ENCODE measurements at regions of chr1 and their contacts with region 1.

Region 1: DNA sequence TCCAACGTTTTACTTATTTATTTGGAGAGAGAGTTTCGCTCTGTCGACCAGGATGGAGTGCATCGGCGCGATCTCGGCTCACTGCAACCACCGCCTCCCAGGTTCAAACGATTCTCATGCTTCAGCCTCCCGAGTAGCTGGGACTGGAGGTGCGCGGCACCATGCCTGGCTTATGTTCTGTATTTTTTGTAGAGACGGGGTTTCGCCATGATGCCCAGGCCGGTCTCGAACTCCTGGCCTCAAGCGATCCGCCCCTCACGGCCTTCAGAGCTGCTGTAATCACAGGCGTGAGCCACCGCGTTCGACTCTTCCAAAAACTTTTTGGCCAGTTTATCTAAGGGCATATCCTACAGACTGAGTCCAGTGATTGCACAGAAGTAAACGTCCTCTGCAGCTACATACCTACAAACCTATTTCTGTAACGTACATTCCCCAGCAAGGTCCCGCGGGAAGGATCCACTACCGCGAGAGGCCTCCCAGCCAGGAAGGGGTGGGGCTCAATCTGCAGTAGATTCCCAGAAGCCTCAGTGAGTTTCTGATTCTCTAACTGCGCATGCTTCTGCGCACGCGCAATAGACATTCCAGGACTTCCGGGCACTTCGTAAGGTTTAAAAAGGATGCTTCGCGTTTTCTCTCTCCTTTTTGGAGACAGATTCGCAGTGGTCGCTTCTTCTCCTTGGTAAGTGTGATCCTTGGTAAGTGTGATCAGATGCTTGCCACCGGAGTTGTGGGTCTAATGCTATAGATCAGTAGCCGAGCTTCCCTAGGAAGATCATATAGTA is at the start of gene RCC1:
- DNase-seq: peak; percentile 97
- ATAC-seq: peak; percentile 85
- H3K4me3 Mint-ChIP-seq: peak within 1 kb of the TSS; percentile 98
- H3K27ac Mint-ChIP-seq: peak within 1 kb of the TSS; percentile 99
- H3K4me1 Mint-ChIP-seq: peaks cover 26% of the 10 kb centered on the region
- H3K27me3 Mint-ChIP-seq: peaks cover 1% of the 10 kb centered on the region
- total RNA-seq, gene RCC1: 103 to 107 TPM

Region 2: DNA sequence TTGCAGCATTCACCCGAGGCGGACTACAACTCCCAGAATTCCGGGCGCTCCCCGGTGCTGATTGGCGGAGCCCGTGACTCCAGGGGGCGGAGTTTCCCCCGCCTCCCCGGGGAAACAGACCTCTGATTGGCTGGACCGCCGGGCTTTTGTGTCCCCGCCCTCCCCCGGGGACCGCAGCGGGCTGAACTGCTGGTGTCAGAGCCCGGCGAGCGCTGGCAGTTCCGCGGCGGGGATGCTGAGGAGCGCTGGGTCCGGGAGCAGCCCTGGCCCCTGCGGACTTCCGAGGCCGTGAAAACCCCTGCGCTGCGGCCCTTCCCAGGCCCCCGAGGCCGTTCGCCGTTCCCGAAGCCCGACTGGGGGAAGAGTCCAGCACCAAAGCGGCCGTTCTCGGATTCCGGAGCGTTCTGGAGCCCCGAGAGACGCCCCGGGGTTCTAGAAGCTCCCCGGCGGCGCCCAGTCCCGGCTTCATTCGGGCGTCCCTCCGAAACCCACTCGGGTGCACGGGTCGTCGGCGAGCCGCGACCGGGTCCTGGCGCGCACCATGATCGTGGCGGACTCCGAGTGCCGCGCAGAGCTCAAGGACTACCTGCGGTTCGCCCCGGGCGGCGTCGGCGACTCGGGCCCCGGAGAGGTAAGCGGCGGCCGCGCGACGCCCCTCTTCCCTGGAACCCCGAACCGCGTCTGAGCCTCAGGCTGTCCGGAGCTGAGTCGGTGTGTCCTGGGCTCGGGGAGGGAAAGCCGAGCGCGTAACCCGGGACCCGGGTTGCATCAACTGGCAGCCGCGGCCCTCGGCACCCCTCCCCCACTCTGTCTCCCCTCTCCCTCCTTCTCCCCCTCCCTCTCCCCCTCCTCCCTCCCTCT is 246.1 kb before region 1 on chr1 and contains the start of gene SESN2:
- CTCF ChIA-PET with region 1: no interaction called
- POLR2A ChIA-PET with region 1: no interaction called
- intact Hi-C with region 1: loop called in 1 of 2 experiments (anchors 1 kb)
- DNase-seq: peak; percentile 100
- ATAC-seq: peak; percentile 93
- H3K4me3 Mint-ChIP-seq: peak within 1 kb of the TSS; percentile 81
- H3K27ac Mint-ChIP-seq: peak within 1 kb of the TSS; percentile 99
- H3K4me1 Mint-ChIP-seq: peaks cover 42% of the 10 kb centered on the region
- H3K27me3 Mint-ChIP-seq: no peaks in the 10 kb centered on the region
- total RNA-seq, gene SESN2: 32.9 to 33.3 TPM

Region 3: DNA sequence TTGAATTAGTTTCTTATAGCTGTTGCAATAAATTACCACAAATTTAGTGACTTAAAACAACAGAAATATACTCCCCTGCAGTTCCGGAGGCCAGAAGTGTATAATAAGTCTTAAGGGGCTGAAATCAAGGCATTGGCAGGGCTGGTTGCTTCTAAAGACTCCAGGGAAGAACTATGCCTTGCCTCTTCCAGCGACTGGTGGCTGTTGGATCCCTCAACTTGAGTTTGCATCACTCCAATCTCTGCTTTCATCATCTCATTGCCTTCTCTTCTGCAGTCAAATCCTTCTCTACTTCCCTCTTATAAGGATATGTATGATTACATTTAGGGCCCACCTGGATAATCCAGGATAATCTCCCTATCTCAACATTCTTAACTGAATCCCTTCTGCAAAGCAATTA is 195.9 kb before region 1 on chr1:
- CTCF ChIA-PET with region 1: no interaction called
- POLR2A ChIA-PET with region 1: no interaction called
- intact Hi-C with region 1: no loop called
- DNase-seq: no peak
- ATAC-seq: no peak
- H3K4me3 Mint-ChIP-seq: no peak overlapping the region
- H3K27ac Mint-ChIP-seq: no peak overlapping the region
- H3K4me1 Mint-ChIP-seq: no peaks in the 10 kb centered on the region
- H3K27me3 Mint-ChIP-seq: no peaks in the 10 kb centered on the region

Region 4: GRCh38 chr1:28369371-28370238 is 136.0 kb before region 1 on chr1 and contains the start of gene PHACTR4:
- CTCF ChIA-PET with region 1: interaction called, 5 read pairs
- POLR2A ChIA-PET with region 1: interaction called, 3 read pairs
- intact Hi-C with region 1: loop called in 1 of 2 experiments (anchors 1 kb)
- DNase-seq: peak; percentile 90
- ATAC-seq: peak; percentile 93
- H3K4me3 Mint-ChIP-seq: peak within 1 kb of the TSS; percentile 92
- H3K27ac Mint-ChIP-seq: peak within 1 kb of the TSS; percentile 92
- H3K4me1 Mint-ChIP-seq: peaks cover 25% of the 10 kb centered on the region
- H3K27me3 Mint-ChIP-seq: no peaks in the 10 kb centered on the region
- total RNA-seq, gene PHACTR4: 23.0 to 30.1 TPM

Region 5: DNA sequence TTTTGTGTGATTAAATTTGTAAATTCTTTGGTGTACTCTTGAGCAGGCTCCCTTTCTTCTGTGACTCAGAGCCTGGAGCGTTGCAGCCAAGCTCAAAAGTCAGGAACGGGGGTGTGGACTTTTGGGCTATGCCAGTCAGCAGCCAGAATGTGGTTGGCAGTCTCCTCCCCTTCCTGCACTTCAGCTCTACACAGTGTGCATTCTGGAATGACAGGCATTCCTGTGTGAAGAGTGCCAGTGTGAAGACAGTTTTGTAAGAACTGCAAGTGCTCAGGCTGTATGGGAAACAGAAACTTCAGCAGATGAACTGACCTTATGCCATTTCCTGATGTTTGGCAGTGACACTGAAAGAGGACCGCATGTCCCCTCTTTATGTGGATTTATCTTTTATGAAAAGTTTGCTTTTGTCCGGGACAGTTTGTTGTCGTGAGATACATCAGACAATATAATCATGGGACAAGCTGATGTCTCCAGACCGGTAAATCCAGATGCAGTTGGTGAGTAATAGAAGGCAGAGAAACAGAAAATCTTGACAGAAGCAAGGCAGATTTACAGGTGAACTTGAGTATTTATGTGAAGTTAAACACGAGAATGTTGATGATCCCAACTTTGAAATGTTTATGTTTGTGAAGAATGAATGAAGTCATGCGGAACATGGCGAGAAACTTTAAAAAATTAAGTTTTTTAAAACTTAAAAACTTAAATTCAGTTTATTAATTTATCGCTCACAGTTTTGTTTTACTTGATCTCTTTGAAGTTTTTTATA is 67.5 kb before region 1 on chr1:
- CTCF ChIA-PET with region 1: no interaction called
- POLR2A ChIA-PET with region 1: no interaction called
- intact Hi-C with region 1: no loop called
- DNase-seq: peak; percentile 32
- ATAC-seq: peak; percentile 78
- H3K4me3 Mint-ChIP-seq: peak overlapping the region; percentile 20
- H3K27ac Mint-ChIP-seq: peak overlapping the region; percentile 58
- H3K4me1 Mint-ChIP-seq: peaks cover 25% of the 10 kb centered on the region
- H3K27me3 Mint-ChIP-seq: no peaks in the 10 kb centered on the region

Region 6: DNA sequence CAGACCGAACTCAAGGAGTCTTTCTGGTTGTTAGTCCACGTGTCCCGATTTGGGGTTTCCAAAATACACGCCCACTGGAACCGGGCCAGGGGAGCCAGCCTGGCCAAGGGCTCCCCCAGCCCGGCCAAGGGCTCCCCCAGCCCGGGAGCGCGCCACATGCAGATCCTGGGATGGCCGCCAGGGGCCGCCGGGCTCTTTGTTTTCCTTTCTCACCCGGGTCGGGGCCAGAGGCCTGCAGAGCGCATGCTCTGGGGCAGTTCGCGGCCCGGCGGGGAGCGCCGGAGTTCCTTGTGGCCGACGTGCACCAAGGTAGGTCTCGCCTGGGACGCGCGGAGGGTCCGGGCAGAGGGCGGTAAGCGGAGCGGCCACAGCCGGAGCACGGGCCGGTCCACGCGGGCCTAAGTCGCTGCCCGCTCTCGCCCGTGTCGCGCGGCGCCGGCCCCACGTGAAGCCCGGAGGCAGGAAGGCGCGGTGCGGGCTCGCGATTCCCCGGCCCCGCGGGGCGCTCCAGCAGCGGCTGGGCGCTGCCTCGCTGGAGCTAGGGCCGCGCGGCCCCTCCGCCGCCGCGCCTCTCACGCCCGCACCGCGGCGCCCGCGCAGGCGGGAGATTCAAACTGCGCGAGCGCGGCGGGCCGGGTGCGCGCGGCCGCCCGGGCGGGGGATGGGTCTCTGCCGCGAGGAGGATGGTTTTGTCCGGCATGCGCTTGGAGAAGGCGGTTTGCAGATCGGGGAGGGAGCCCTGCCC is 12.6 kb after region 1 on chr1:
- CTCF ChIA-PET with region 1: interaction called, 3 read pairs
- POLR2A ChIA-PET with region 1: interaction called, 6 read pairs
- intact Hi-C with region 1: loop called in 1 of 2 experiments (anchors 1 kb)
- DNase-seq: peak; percentile 95
- ATAC-seq: peak; percentile 66
- H3K4me3 Mint-ChIP-seq: peak overlapping the region; percentile 77
- H3K27ac Mint-ChIP-seq: peak overlapping the region; percentile 83
- H3K4me1 Mint-ChIP-seq: peaks cover 34% of the 10 kb centered on the region
- H3K27me3 Mint-ChIP-seq: no peaks in the 10 kb centered on the region

Region 7: GRCh38 chr1:28668191-28668955 is 162.8 kb after region 1 on chr1 and contains the start of gene GMEB1:
- CTCF ChIA-PET with region 1: no interaction called
- POLR2A ChIA-PET with region 1: no interaction called
- intact Hi-C with region 1: loop called in 1 of 2 experiments (anchors 1 kb)
- DNase-seq: peak; percentile 93
- ATAC-seq: peak; percentile 72
- H3K4me3 Mint-ChIP-seq: peak within 1 kb of the TSS; percentile 84
- H3K27ac Mint-ChIP-seq: peak within 1 kb of the TSS; percentile 99
- H3K4me1 Mint-ChIP-seq: peaks cover 11% of the 10 kb centered on the region
- H3K27me3 Mint-ChIP-seq: no peaks in the 10 kb centered on the region
- total RNA-seq, gene GMEB1: 20.3 to 25.4 TPM

Region 8: DNA sequence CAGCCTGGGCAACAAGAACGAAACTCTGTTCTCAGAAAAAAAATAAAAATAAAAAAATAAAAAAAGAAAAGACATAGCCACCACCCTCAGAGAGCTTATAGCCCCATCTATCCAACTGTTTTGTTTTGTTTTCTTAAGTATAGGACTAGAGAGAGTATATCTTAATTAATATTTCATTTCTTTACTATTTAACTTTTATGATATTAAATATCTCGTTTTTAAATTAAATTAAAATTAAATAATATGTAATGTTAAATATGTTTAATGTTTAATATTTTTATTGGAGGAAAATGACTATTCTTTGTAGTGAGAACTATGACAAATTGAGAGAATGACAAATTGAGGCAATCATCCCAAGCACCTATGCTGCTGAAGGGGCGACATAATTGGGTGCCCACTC is 198.0 kb after region 1 on chr1:
- CTCF ChIA-PET with region 1: no interaction called
- POLR2A ChIA-PET with region 1: no interaction called
- intact Hi-C with region 1: no loop called
- DNase-seq: no peak
- ATAC-seq: no peak
- H3K4me3 Mint-ChIP-seq: no peak overlapping the region
- H3K27ac Mint-ChIP-seq: no peak overlapping the region
- H3K4me1 Mint-ChIP-seq: peaks cover 3% of the 10 kb centered on the region
- H3K27me3 Mint-ChIP-seq: no peaks in the 10 kb centered on the region